CD8-positive, alpha-beta T cell (primary cell): ENCODE measurements at regions of chr3 and their contacts with region 1.

Region 1: GRCh38 chr3:44729384-44729910 is at the start of gene ZNF501:
- DNase-seq: peak; percentile 64 to 92 (median 87)
- ATAC-seq: peak; percentile 93
- H3K4me3 ChIP-seq: peak within 1 kb of the TSS; percentile 67 to 83
- H3K4me3 Mint-ChIP-seq: peak within 1 kb of the TSS; percentile 91
- H3K27ac ChIP-seq: peak within 1 kb of the TSS; percentile 41 to 62
- H3K27ac Mint-ChIP-seq: peak within 1 kb of the TSS; percentile 82
- H3K4me1 ChIP-seq: peaks cover 6% of the 10 kb centered on the region
- H3K4me1 Mint-ChIP-seq: peaks cover 14% of the 10 kb centered on the region
- H3K27me3 ChIP-seq: no peaks in the 10 kb centered on the region
- H3K27me3 Mint-ChIP-seq: no peaks in the 10 kb centered on the region
- CTCF ChIP-seq: no peak
- total RNA-seq, gene ZNF501: 0.75 to 0.87 TPM

Region 2: DNA sequence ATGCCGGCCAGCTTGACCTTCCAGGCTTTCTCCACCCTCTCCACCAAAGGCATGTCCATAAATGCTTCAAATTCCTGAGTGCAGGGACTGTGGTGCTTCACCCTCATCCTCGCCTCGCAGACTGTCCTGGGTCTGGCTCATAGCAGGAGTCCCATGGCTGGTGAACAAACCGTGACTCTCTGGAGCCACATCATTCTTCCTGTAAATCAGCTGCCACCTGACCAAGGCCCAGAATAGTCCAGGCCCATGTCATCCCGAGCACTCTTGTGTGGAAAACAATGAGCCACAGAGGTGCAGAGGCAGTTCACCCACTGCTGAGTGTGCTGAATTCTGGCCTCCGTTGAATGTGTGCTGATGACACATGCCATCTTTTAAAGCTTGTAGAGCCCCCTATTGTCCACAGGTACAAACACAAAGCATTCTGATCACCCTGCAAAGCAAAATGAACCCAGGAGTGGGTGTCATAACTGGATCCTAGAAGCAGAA is 970.1 kb before region 1 on chr3:
- CTCF ChIA-PET with region 1: no interaction called
- POLR2A ChIA-PET with region 1: no interaction called
- intact Hi-C with region 1: no loop called
- DNase-seq: peak in 2 of 9 experiments; percentile 25 to 37
- ATAC-seq: peak; percentile 43
- H3K4me3 ChIP-seq: no peak overlapping the region
- H3K4me3 Mint-ChIP-seq: no peak overlapping the region
- H3K27ac ChIP-seq: no peak overlapping the region
- H3K27ac Mint-ChIP-seq: no peak overlapping the region
- H3K4me1 ChIP-seq: peaks cover 40% of the 10 kb centered on the region
- H3K4me1 Mint-ChIP-seq: peaks cover 52% of the 10 kb centered on the region
- H3K27me3 ChIP-seq: no peaks in the 10 kb centered on the region
- H3K27me3 Mint-ChIP-seq: no peaks in the 10 kb centered on the region
- CTCF ChIP-seq: no peak

Region 3: GRCh38 chr3:44235604-44236484 is 493.6 kb before region 1 on chr3:
- CTCF ChIA-PET with region 1: no interaction called
- POLR2A ChIA-PET with region 1: no interaction called
- intact Hi-C with region 1: loop called in 1 of 2 experiments (anchors 5 kb)
- DNase-seq: peak; percentile 5 to 79 (median 60)
- ATAC-seq: peak; percentile 96
- H3K4me3 ChIP-seq: no peak overlapping the region
- H3K4me3 Mint-ChIP-seq: no peak overlapping the region
- H3K27ac ChIP-seq: no peak overlapping the region
- H3K27ac Mint-ChIP-seq: no peak overlapping the region
- H3K4me1 ChIP-seq: peaks cover 13% of the 10 kb centered on the region
- H3K4me1 Mint-ChIP-seq: peaks cover 13% of the 10 kb centered on the region
- H3K27me3 ChIP-seq: no peaks in the 10 kb centered on the region
- H3K27me3 Mint-ChIP-seq: peaks cover 12% of the 10 kb centered on the region
- CTCF ChIP-seq: peak; percentile 79

Region 4: GRCh38 chr3:44510000-44510368 is 219.5 kb before region 1 on chr3:
- CTCF ChIA-PET with region 1: no interaction called
- POLR2A ChIA-PET with region 1: interaction called, 8 read pairs
- intact Hi-C with region 1: loop called in 1 of 2 experiments (anchors 1 kb)
- DNase-seq: peak in 4 of 9 experiments; percentile 6 to 54 (median 21)
- ATAC-seq: peak; percentile 27
- H3K4me3 ChIP-seq: peak overlapping the region; percentile 78
- H3K4me3 Mint-ChIP-seq: peak overlapping the region; percentile 96
- H3K27ac ChIP-seq: peak overlapping the region; percentile 61 to 82
- H3K27ac Mint-ChIP-seq: peak overlapping the region; percentile 96
- H3K4me1 ChIP-seq: peaks cover 22% of the 10 kb centered on the region
- H3K4me1 Mint-ChIP-seq: peaks cover 49% of the 10 kb centered on the region
- H3K27me3 ChIP-seq: no peaks in the 10 kb centered on the region
- H3K27me3 Mint-ChIP-seq: no peaks in the 10 kb centered on the region
- CTCF ChIP-seq: no peak

Region 5: DNA sequence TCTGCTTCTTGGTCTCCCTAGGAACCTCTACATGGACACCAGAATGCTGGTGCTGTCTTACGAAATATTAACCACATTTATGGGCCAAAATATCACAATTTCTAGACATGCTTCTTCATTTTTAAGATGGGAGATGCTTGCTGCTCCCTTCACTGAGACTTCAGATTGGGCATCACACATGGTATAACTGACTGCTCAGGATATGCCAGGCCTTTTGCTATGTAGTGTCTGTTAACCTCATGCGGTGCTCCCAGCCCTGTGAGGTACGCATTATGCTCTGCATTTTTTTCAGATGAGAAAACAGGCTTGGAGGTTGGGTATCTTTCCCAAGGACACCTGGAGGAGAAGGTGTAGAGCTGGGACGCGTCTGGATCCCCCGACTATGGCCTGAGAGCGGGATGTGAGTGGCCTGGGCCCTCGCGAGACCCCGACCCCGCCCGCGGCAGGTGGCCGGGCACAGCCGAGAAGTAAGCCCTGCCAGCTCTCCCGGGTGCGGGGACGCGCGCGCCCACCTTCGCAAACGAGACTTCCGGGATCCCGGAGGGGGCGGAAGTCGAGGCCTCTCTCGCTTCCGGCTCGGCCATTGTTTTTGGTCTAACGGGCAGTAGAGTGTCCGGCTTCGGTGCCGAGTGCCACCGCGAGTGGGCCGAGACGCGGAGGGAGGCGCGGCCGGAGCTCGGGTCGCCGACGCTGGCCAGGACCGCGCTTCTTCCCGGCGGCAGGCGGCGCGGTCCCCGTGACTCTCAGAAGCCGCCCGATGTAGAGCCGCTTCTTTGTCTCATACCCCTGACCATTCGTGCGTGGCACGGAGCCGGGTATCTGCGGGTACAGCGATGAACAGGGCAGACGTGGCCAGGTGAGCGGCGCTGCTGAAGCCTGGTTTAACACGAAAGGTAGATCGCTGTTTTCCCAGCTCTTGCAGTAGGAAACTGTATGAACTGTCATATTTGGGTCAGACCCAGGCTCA is 174.5 kb before region 1 on chr3 and contains the start of gene ZKSCAN7:
- CTCF ChIA-PET with region 1: interaction called, 3 read pairs
- POLR2A ChIA-PET with region 1: no interaction called
- intact Hi-C with region 1: loop called in 1 of 2 experiments (anchors 1 kb)
- DNase-seq: peak; percentile 20 to 79 (median 51)
- ATAC-seq: peak; percentile 74
- H3K4me3 ChIP-seq: peak within 1 kb of the TSS; percentile 76 to 88
- H3K4me3 Mint-ChIP-seq: peak within 1 kb of the TSS; percentile 93
- H3K27ac ChIP-seq: peak within 1 kb of the TSS; percentile 58 to 74
- H3K27ac Mint-ChIP-seq: peak within 1 kb of the TSS; percentile 92
- H3K4me1 ChIP-seq: peaks cover 9% of the 10 kb centered on the region
- H3K4me1 Mint-ChIP-seq: peaks cover 30% of the 10 kb centered on the region
- H3K27me3 ChIP-seq: no peaks in the 10 kb centered on the region
- H3K27me3 Mint-ChIP-seq: peaks cover 9% of the 10 kb centered on the region
- CTCF ChIP-seq: no peak
- total RNA-seq, gene ZKSCAN7: 0.68 to 1.6 TPM

Region 6: DNA sequence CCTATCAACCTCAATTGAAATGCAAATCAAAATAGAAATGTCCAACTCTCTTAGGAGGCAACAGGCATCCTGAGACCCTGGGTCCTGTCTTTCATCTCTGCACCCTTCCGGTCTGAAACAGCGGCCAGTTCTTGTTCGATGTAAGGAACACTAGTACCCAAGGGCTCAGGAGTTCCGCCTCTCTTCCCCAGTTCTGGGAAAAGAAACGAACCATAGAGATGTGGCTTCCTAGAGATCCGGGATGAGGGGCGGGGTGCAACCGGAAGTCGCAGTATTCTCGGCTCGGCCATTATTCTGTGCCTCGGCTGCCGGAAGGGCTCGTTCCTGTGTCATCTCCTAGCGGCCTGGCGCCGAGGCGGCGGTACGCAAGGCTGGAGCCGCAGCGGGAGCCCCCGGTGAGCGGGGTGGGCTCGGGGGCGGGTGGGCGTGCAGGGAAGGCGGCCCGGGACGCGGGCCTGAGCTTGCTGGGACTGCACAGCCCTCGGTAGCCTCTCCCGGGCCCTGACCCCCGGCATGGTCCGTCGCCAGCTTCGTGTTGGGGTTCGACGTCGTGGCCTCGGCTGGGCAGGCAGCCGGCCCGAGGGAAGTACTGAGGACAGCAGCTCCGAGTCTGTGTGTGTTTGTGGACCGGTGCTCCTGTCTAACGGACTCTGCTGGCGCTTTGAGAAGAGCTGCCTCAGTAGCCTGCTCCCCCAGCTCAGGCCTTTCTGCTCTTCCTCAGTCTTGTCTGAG is 104.5 kb before region 1 on chr3 and contains the start of gene ZNF197:
- CTCF ChIA-PET with region 1: no interaction called
- POLR2A ChIA-PET with region 1: no interaction called
- intact Hi-C with region 1: loop called in 1 of 2 experiments (anchors 1 kb)
- DNase-seq: peak in 8 of 9 experiments; percentile 42 to 76 (median 55)
- ATAC-seq: peak; percentile 76
- H3K4me3 ChIP-seq: peak within 1 kb of the TSS; percentile 66 to 70
- H3K4me3 Mint-ChIP-seq: peak within 1 kb of the TSS; percentile 88
- H3K27ac ChIP-seq: peak within 1 kb of the TSS; percentile 49 to 60
- H3K27ac Mint-ChIP-seq: peak within 1 kb of the TSS; percentile 80
- H3K4me1 ChIP-seq: peaks cover 13% of the 10 kb centered on the region
- H3K4me1 Mint-ChIP-seq: peaks cover 46% of the 10 kb centered on the region
- H3K27me3 ChIP-seq: no peaks in the 10 kb centered on the region
- H3K27me3 Mint-ChIP-seq: no peaks in the 10 kb centered on the region
- CTCF ChIP-seq: no peak
- total RNA-seq, gene ZNF197: 2.9 to 3.5 TPM

Region 7: GRCh38 chr3:44712455-44713075 is 16.9 kb before region 1 on chr3 and contains the start of gene ZNF502:
- CTCF ChIA-PET with region 1: interaction called, 4 read pairs
- POLR2A ChIA-PET with region 1: interaction called, 27 read pairs
- intact Hi-C with region 1: loop called (anchors 1 kb)
- DNase-seq: peak; percentile 6 to 80 (median 70)
- ATAC-seq: peak; percentile 90
- H3K4me3 ChIP-seq: peak within 1 kb of the TSS; percentile 59 to 77
- H3K4me3 Mint-ChIP-seq: peak within 1 kb of the TSS; percentile 93
- H3K27ac ChIP-seq: peak within 1 kb of the TSS; percentile 32 to 66
- H3K27ac Mint-ChIP-seq: peak within 1 kb of the TSS; percentile 90
- H3K4me1 ChIP-seq: no peaks in the 10 kb centered on the region
- H3K4me1 Mint-ChIP-seq: peaks cover 18% of the 10 kb centered on the region
- H3K27me3 ChIP-seq: peaks cover 0 to 2% of the 10 kb centered on the region in 2 experiments
- H3K27me3 Mint-ChIP-seq: peaks cover 25% of the 10 kb centered on the region
- CTCF ChIP-seq: peak; percentile 26
- total RNA-seq, gene ZNF502: 5.8 to 6.3 TPM

Region 8: DNA sequence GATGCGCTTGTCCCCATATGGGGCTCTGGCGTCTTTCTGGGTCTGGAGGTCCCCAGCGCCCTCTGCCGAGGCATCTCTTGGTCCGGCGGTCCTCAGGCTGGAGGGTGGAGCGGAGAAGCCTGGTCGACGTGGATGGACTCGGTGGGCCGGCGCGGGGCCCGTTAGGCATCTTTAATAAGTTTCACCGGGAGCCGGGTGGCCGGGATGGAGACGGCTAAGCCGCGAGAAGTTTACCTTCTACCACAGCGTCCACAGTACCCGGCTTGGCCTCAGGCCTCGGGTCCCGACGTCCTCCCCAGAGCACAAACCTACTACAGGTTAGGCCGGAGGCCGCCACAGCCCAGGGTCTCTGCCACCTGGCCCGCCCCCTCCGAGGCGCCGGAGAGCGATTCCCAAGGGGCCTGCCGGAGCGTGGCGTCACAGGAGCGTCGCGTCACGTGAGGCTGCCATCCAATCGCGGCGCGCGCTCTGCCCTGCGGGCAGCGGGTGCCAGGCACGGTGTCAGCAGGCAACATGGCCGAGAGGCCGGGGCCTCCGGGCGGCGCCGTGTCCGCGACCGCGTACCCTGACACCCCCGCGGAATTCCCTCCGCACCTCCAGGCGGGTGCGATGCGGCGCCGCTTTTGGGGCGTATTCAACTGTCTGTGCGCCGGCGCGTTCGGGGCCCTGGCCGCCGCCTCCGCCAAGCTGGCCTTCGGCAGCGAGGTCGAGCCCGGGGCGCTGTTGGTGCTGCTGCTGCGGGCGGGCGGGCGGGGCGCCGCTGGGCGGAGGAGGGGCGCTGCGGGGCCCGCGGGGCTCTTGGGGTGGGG is 132.2 kb after region 1 on chr3 and contains the start of gene TMEM42:
- CTCF ChIA-PET with region 1: no interaction called
- POLR2A ChIA-PET with region 1: interaction called, 3 read pairs
- intact Hi-C with region 1: loop called in 1 of 2 experiments (anchors 10 kb)
- DNase-seq: peak; percentile 72 to 96 (median 87)
- ATAC-seq: peak; percentile 89
- H3K4me3 ChIP-seq: peak within 1 kb of the TSS; percentile 86 to 92
- H3K4me3 Mint-ChIP-seq: peak within 1 kb of the TSS; percentile 87
- H3K27ac ChIP-seq: peak within 1 kb of the TSS; percentile 90 to 91
- H3K27ac Mint-ChIP-seq: peak within 1 kb of the TSS; percentile 92
- H3K4me1 ChIP-seq: peaks cover 31% of the 10 kb centered on the region
- H3K4me1 Mint-ChIP-seq: peaks cover 45% of the 10 kb centered on the region
- H3K27me3 ChIP-seq: no peaks in the 10 kb centered on the region
- H3K27me3 Mint-ChIP-seq: no peaks in the 10 kb centered on the region
- CTCF ChIP-seq: no peak
- total RNA-seq, gene TMEM42: 6.6 to 8.3 TPM